ENCODE measurements at regions of chr12 and their contacts with region 1.

Region 1: GRCh38 chr12:54958048-54958658 is 26.4 kb downstream of the TESPA1 start:
- DNase-seq: no peak
- ATAC-seq: peak in 1 of 4 donors; percentile 65
- H3K4me3 ChIP-seq: no peak overlapping the region
- H3K27ac ChIP-seq: no peak overlapping the region
- H3K4me1 ChIP-seq: no peaks in the 10 kb centered on the region
- H3K27me3 ChIP-seq: no peaks in the 10 kb centered on the region
- CTCF ChIP-seq: peak; percentile 67

Region 2: GRCh38 chr12:54596526-54596946 is 361.6 kb before region 1 on chr12:
- intact Hi-C with region 1: loop called (anchors 5 kb)
- DNase-seq: peak; percentile 62 to 76
- ATAC-seq: peak; percentile 74 to 92 (median 76)
- H3K4me3 ChIP-seq: no peak overlapping the region
- H3K27ac ChIP-seq: no peak overlapping the region
- H3K4me1 ChIP-seq: no peaks in the 10 kb centered on the region
- H3K27me3 ChIP-seq: no peaks in the 10 kb centered on the region
- CTCF ChIP-seq: peak; percentile 82

Region 3: DNA sequence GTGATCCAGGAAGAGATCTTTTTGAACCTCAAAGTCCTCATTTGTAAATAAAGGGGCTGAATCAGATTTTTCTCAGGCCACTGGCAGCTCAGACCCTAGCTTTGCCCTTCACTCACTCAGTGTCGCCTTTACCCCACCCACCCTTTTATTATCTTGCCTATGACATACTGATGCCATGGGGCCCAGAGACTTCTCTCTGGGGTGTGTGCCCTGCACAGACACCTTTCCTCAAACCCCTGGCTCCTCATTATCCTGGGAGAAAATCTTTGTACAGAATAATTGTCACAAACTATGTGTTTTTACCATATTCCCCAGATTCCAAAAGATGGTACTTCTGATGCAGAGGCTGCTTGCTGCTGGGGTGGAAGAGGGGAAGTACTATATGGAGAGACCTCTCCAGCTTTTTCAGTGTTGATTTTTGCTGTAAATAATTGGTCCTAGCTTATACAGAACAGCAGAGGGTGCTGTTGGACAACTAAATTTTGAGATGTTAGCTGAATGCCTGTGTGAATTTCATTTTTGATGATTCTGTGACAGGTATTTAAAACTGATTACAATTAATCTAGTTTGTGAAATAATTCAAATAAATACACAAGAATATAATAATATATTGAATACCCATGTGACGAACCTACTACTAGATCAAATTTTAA is 256.1 kb before region 1 on chr12:
- intact Hi-C with region 1: loop called (anchors 5 kb)
- DNase-seq: no peak
- ATAC-seq: peak in 1 of 4 donors; percentile 54
- H3K4me3 ChIP-seq: no peak overlapping the region
- H3K27ac ChIP-seq: no peak overlapping the region
- H3K4me1 ChIP-seq: no peaks in the 10 kb centered on the region
- H3K27me3 ChIP-seq: no peaks in the 10 kb centered on the region
- CTCF ChIP-seq: peak; percentile 58

Region 4: GRCh38 chr12:54751493-54751892 is 206.7 kb before region 1 on chr12:
- intact Hi-C with region 1: loop called (anchors 2 to 10 kb)
- DNase-seq: no peak
- ATAC-seq: no peak
- H3K4me3 ChIP-seq: no peak overlapping the region
- H3K27ac ChIP-seq: no peak overlapping the region
- H3K4me1 ChIP-seq: no peaks in the 10 kb centered on the region
- H3K27me3 ChIP-seq: no peaks in the 10 kb centered on the region
- CTCF ChIP-seq: no peak

Region 5: DNA sequence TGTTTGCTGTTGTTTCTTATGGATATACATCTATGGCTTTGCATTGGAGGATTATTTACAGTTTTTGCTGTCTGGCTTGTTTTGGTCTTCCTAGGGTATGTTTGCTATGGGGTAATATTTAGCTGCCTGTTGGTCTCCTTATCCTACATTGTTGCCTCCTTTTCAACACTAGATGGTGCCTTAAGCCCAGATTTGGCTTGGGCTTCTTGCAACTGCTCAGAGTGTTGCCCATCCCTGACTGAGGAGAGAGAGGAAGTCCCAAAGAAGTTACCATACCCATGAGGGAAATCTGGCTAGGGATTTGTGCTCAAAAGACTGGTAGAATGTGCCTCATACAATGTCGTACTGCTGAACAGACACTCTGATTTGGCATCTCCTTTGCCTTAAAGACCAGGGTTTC is 198.4 kb before region 1 on chr12:
- intact Hi-C with region 1: loop called in 1 of 2 experiments (anchors 10 kb)
- DNase-seq: no peak
- ATAC-seq: no peak
- H3K4me3 ChIP-seq: no peak overlapping the region
- H3K27ac ChIP-seq: no peak overlapping the region
- H3K4me1 ChIP-seq: no peaks in the 10 kb centered on the region
- H3K27me3 ChIP-seq: no peaks in the 10 kb centered on the region
- CTCF ChIP-seq: no peak